Right ventricle myocardium inferior (tissue), 1 donor: ENCODE measurements at regions of chr1 and their contacts with region 1.

Region 1: DNA sequence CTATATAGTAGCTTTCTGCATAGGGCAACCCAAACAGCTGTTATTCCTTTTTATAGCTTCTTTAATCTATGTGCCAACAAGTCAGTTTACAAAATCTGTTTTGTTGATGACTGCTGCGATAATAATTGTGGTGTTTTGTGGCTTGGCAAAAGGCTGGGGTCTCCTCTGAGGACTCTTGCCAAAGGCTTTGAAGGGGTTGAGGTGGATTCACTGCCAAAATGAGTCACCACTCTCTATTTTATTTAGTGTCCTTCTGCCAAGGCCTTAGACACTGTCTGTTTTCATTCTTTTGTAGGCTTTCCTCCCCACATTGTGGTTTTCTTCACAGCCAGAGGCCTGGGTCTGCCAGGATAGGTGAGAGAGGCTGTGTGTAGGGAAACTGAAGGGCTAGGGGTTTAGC is 161.8 kb downstream of the NFIA start:
- DNase-seq: no peak
- ATAC-seq: peak; percentile 6

Region 2: DNA sequence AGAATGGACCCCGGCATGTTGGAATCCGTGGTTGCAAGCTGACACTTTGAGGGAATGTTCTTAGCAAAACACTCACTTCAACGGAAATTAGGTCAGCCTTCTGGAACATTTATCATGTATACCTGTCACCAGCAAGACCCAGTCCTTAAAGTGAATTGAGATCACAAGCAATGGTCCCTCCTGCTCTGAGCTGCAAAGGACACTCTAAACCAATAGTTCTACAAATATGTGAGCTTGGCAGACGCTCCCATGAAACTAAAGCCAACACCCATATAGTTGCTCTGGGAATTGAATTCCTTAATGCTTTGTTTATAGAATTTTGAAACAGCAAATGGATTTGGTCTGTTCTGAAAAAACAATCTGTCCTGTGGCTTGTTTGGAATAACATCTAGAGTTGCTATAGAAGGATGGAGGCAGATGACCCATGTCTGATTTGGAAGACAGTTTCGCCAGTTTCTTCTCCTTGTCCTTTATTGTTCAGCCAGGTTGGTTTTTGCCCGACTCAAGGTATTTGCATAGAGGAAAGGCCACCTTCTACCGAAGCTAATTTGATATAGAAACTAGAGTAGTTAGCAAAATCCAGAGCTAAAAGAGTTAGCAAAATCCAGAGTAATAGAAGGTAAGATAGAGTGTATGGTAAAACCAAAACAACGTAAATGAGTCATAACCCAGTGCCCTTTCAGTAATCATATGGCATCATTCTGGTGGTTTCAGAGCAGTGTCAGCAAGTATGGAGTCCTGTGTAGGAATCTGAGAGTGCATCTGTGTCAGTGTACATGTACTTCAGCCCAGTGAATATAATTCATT is 74.4 kb after region 1 on chr1:
- intact Hi-C with region 1: loop called (anchors 5 kb)
- DNase-seq: no peak
- ATAC-seq: peak; percentile 84

Region 3: GRCh38 chr1:61337981-61338848 is 94.1 kb after region 1 on chr1:
- intact Hi-C with region 1: loop called (anchors 5 kb)
- DNase-seq: peak; percentile 73
- ATAC-seq: peak; percentile 84